Naive thymus-derived CD8-positive, alpha-beta T cell (primary cell): ENCODE measurements at regions of chr16 and their contacts with region 1.

Region 1: GRCh38 chr16:50152807-50153452 is at the start of gene TENT4B:
- DNase-seq: peak; percentile 85 to 97 (median 92)
- ATAC-seq: peak; percentile 75 to 79
- H3K4me3 Mint-ChIP-seq: peak within 1 kb of the TSS; percentile 86 to 97 (median 94)
- H3K27ac Mint-ChIP-seq: peak within 1 kb of the TSS; percentile 90 to 99 (median 98)
- H3K4me1 Mint-ChIP-seq: peaks cover 20 to 43% (median 39%) of the 10 kb centered on the region in 4 donors
- H3K27me3 Mint-ChIP-seq: no peaks in the 10 kb centered on the region
- polyA plus RNA-seq, gene TENT4B: 5.3 to 8.3 (median 6.6) TPM

Region 2: GRCh38 chr16:50065624-50066481 is 87.1 kb before region 1 on chr16 and contains the start of gene HEATR3:
- POLR2A ChIA-PET with region 1: interaction called, 26 read pairs
- DNase-seq: peak; percentile 87 to 95 (median 91)
- ATAC-seq: peak; percentile 77 to 87
- H3K4me3 Mint-ChIP-seq: peak within 1 kb of the TSS; percentile 85 to 95 (median 93)
- H3K27ac Mint-ChIP-seq: peak within 1 kb of the TSS; percentile 55 to 96 (median 92)
- H3K4me1 Mint-ChIP-seq: peaks cover 24 to 39% (median 34%) of the 10 kb centered on the region in 4 donors
- H3K27me3 Mint-ChIP-seq: no peaks in the 10 kb centered on the region
- polyA plus RNA-seq, gene HEATR3: 5.5 to 6.7 (median 5.6) TPM